MCF 10A (cell line): ENCODE measurements at regions of chr9 and their contacts with region 1.

Region 1: DNA sequence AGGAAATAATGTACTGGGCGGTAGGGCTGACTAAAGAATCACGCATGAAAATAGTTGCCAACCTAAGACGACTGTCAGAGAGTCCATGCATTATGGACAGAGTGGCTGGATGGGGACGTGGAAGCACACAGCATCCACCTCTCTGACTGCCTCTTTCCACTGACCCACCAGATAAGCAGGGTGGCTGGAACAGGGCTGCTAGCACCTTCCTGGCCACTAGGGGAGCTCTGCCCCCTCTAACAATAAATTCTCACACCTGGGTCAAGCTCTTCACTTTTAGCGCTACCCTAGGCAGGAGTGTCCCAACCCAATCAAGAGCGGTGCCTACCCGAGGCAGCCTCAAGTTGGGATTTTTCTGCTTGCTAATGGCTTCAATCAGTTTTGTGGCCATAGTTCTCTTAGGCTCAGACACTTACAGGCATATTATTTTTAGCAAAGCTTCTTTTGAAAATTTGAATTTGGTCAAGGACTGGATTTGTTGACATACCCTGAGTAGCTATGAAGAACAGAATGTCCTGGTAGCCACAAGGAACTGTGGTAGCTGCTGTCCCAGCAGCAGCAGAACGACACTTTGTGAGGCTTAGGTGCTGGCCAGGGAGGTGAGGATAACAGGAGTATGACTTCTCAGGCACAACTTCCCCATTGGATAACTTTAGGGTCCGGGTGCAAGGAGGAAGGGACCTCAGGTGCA is 6.9 kb upstream of the TPM2 start:
- DNase-seq: peak; percentile 68
- H3K4me3 Mint-ChIP-seq: no peak overlapping the region
- H3K27ac Mint-ChIP-seq: no peak overlapping the region
- H3K4me1 Mint-ChIP-seq: no peaks in the 10 kb centered on the region
- H3K27me3 Mint-ChIP-seq: no peaks in the 10 kb centered on the region
- CTCF ChIP-seq: peak; percentile 72

Region 2: DNA sequence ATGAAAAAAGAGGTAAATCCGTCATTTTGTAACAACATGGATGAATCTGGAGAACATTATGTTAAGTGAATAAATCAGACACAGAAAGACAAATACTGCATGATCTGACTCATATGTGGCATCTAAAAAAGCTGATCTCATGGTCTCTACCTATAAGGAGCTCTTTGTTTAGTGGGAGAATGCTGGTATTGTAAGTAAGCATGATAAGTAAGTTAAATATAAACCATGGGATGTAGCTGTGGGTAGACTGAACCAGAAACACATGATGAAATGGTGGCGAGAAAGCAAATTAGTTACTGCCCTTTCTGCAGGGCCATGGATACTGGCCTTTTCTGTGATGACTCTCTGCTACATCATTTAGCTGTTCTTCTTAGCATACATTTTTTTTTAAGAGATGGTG is 273.2 kb before region 1 on chr9:
- CTCF ChIA-PET with region 1: no interaction called
- POLR2A ChIA-PET with region 1: no interaction called
- intact Hi-C with region 1: no loop called
- DNase-seq: no peak
- H3K4me3 Mint-ChIP-seq: no peak overlapping the region
- H3K27ac Mint-ChIP-seq: no peak overlapping the region
- H3K4me1 Mint-ChIP-seq: no peaks in the 10 kb centered on the region
- H3K27me3 Mint-ChIP-seq: no peaks in the 10 kb centered on the region
- CTCF ChIP-seq: no peak

Region 3: DNA sequence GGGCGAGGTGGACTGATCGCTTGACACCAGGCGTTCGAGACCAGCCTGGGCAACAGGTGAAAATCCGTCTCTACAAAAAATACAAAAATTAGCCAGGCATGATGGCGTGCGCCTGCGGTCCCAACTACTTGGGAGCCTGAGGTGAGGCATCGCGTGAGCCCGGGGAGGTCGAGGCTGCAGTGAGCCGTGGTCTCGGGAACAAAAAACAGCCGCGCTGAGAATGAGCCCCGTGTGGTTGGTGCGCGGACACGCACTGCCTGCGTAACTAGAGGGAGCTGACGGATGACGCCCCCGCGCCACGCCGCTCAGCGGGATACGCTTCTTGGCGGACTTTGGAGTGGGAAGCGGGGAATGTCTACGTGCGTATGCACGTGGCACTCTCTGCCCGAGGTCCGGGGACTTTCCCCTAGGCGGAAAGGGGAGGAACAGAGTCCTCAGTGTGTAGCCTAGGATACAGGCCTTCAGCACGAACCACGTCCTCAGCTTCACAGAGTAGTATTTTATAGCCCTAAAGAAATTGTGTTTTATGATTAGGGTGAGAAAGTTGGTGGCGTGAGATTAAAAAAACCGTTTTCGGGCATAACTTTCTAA is 39.0 kb before region 1 on chr9 and contains the start of gene RMRP:
- CTCF ChIA-PET with region 1: interaction called, 30 read pairs
- POLR2A ChIA-PET with region 1: interaction called, 38 read pairs
- intact Hi-C with region 1: no loop called
- DNase-seq: peak; percentile 99
- H3K4me3 Mint-ChIP-seq: peak within 1 kb of the TSS; percentile 62
- H3K27ac Mint-ChIP-seq: peak within 1 kb of the TSS; percentile 100
- H3K4me1 Mint-ChIP-seq: peaks cover 21% of the 10 kb centered on the region
- H3K27me3 Mint-ChIP-seq: no peaks in the 10 kb centered on the region
- CTCF ChIP-seq: no peak
- total RNA-seq, gene RMRP: 13,245 and 17,503 TPM in 2 replicates

Region 4: DNA sequence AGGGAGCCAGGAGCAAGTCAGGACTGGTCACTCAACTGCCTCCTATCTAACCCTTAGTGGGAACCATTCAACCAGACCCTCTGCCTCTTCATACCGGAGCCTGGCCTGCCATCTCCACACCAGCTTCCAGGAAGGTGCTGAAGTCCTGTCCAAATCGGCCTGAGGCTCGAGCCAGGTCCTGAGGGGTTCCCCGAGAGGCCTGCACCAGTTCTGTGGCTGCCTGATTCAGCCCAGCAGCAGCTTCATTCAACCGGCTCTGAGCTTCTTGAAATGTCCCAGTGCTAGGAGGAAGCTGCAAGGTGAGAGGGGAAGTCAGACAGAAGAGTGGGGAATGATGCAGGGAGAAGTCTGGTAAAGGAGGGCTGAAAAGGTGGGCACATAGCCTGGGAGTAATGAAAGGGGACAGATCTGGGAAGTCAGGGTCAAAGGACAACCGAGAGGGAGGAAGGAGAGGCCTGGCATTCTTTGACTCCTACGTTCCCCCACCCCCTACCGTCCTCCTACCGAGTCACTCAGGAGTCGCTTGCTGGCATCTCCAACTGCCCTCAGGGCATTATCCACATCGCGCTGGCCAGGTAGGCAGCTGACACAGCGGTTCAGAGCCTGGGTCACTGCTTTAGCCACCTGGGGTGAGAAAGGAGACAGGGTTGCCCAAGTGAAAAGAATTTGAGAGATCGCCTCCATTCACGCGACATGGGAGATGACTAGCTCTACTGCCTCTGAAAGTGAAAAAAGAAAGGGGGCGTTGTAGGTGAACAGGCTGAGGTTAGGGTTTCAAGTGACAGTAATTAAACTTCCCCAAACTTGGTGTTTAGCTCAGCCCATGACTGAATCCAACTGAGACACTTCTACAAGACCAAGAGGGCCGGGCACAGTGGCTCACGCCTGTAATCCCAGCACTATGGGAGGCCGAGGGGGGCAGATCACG is 15.1 kb after region 1 on chr9:
- CTCF ChIA-PET with region 1: interaction called, 155 read pairs
- POLR2A ChIA-PET with region 1: interaction called, 13 read pairs
- intact Hi-C with region 1: no loop called
- DNase-seq: peak; percentile 40
- H3K4me3 Mint-ChIP-seq: no peak overlapping the region
- H3K27ac Mint-ChIP-seq: peak overlapping the region; percentile 59
- H3K4me1 Mint-ChIP-seq: peaks cover 6% of the 10 kb centered on the region
- H3K27me3 Mint-ChIP-seq: no peaks in the 10 kb centered on the region
- CTCF ChIP-seq: no peak

Region 5: GRCh38 chr9:35723908-35724420 is 27.3 kb after region 1 on chr9:
- CTCF ChIA-PET with region 1: interaction called, 136 read pairs
- POLR2A ChIA-PET with region 1: interaction called, 13 read pairs
- intact Hi-C with region 1: loop called (anchors 2 kb)
- DNase-seq: no peak
- H3K4me3 Mint-ChIP-seq: no peak overlapping the region
- H3K27ac Mint-ChIP-seq: no peak overlapping the region
- H3K4me1 Mint-ChIP-seq: peaks cover 14% of the 10 kb centered on the region
- H3K27me3 Mint-ChIP-seq: no peaks in the 10 kb centered on the region
- CTCF ChIP-seq: no peak

Region 6: GRCh38 chr9:35748858-35749514 is 52.3 kb after region 1 on chr9 and contains the starts of genes GBA2 and RGP1:
- CTCF ChIA-PET with region 1: interaction called, 19 read pairs
- POLR2A ChIA-PET with region 1: interaction called, 3 read pairs
- intact Hi-C with region 1: no loop called
- DNase-seq: peak; percentile 77
- H3K4me3 Mint-ChIP-seq: peak within 1 kb of the TSS; percentile 94
- H3K27ac Mint-ChIP-seq: peak within 1 kb of the TSS; percentile 85
- H3K4me1 Mint-ChIP-seq: peaks cover 31% of the 10 kb centered on the region
- H3K27me3 Mint-ChIP-seq: no peaks in the 10 kb centered on the region
- CTCF ChIP-seq: no peak
- total RNA-seq, gene GBA2: 51.3 and 55.2 TPM in 2 replicates
- total RNA-seq, gene RGP1: 33.8 and 35.8 TPM in 2 replicates